CD4-positive, alpha-beta memory T cell (primary cell): ENCODE measurements at regions of chrX and their contacts with region 1.

Region 1: DNA sequence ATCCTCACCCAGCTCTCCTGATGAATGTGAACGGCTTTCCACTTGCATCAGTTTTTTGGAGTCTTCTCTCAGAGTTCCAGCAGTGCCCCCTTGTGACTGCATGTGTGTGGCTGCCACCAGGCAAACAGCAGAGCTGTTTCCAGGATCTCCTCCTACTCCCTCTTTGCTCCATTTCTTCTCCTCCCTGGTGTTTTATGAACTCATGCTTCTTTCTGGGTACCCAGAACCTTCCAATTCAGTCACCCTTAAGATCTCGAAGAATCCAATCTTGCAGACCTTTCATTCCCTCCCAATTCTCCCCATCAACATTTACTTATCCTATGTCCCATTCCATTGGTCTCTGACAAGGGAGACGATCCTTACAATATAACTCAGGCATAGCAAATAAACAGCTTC is 6.8 kb upstream of the TCEANC start:
- DNase-seq: no peak
- H3K4me3 ChIP-seq: no peak overlapping the region
- H3K4me3 Mint-ChIP-seq: peak overlapping the region in 1 of 8 donors; percentile 9
- H3K27ac ChIP-seq: no peak overlapping the region
- H3K27ac Mint-ChIP-seq: peak overlapping the region in 2 of 7 donors; percentile 32 to 57
- H3K4me1 ChIP-seq: peaks cover 10% of the 10 kb centered on the region
- H3K4me1 Mint-ChIP-seq: peaks cover 4 to 16% (median 8%) of the 10 kb centered on the region in 4 donors
- H3K27me3 ChIP-seq: no peaks in the 10 kb centered on the region
- H3K27me3 Mint-ChIP-seq: no peaks in the 10 kb centered on the region

Region 2: DNA sequence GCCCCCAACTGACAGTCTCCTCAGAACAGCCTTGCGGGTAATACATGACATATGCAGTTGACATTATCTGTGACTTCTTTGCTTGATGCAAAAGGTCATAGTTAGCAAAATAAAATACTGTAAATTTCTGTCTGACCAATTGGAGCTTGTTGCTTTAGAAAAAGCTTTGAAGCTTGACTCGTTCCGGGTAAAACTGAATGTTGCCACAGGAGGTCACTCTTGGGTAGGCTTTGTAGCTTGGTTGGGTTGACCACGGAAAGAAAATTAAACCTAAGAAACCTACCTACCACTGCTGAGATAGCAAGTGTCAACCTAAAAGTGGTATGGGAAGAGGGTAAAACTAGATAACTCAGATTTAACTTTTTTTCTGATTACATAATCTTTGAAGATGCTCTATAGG is 831.7 kb before region 1 on chrX:
- CTCF ChIA-PET with region 1: interaction called, 3 read pairs
- POLR2A ChIA-PET with region 1: no interaction called
- intact Hi-C with region 1: loop called (anchors 10 kb)
- DNase-seq: peak in 4 of 5 donors; percentile 17 to 39 (median 26)
- H3K4me3 ChIP-seq: no peak overlapping the region
- H3K4me3 Mint-ChIP-seq: no peak overlapping the region
- H3K27ac ChIP-seq: no peak overlapping the region
- H3K27ac Mint-ChIP-seq: no peak overlapping the region
- H3K4me1 ChIP-seq: no peaks in the 10 kb centered on the region
- H3K4me1 Mint-ChIP-seq: no peaks in the 10 kb centered on the region
- H3K27me3 ChIP-seq: no peaks in the 10 kb centered on the region
- H3K27me3 Mint-ChIP-seq: no peaks in the 10 kb centered on the region

Region 3: GRCh38 chrX:13506574-13506973 is 139.6 kb before region 1 on chrX:
- CTCF ChIA-PET with region 1: interaction called, 15 read pairs
- POLR2A ChIA-PET with region 1: no interaction called
- intact Hi-C with region 1: loop called (anchors 1 kb)
- DNase-seq: peak; percentile 40 to 45 (median 41)
- H3K4me3 ChIP-seq: no peak overlapping the region
- H3K4me3 Mint-ChIP-seq: no peak overlapping the region
- H3K27ac ChIP-seq: no peak overlapping the region
- H3K27ac Mint-ChIP-seq: no peak overlapping the region
- H3K4me1 ChIP-seq: no peaks in the 10 kb centered on the region
- H3K4me1 Mint-ChIP-seq: peaks cover 0 to 5% (median 0%) of the 10 kb centered on the region in 4 donors
- H3K27me3 ChIP-seq: no peaks in the 10 kb centered on the region
- H3K27me3 Mint-ChIP-seq: peaks cover 0 to 2% of the 10 kb centered on the region in 2 donors